Activated naive CD4-positive, alpha-beta T cell treated with anti-CD3 and anti-CD28 coated beads for 36 hours (primary cell): ENCODE measurements at regions of chr2 and their contacts with region 1.

Region 1: GRCh38 chr2:94956797-94957391 is 68.6 kb upstream of the MAL start:
- DNase-seq: peak; percentile 63
- H3K4me3 Mint-ChIP-seq: no peak overlapping the region
- H3K27ac Mint-ChIP-seq: no peak overlapping the region
- H3K4me1 Mint-ChIP-seq: no peaks in the 10 kb centered on the region
- H3K27me3 Mint-ChIP-seq: peaks cover 38% of the 10 kb centered on the region

Region 2: DNA sequence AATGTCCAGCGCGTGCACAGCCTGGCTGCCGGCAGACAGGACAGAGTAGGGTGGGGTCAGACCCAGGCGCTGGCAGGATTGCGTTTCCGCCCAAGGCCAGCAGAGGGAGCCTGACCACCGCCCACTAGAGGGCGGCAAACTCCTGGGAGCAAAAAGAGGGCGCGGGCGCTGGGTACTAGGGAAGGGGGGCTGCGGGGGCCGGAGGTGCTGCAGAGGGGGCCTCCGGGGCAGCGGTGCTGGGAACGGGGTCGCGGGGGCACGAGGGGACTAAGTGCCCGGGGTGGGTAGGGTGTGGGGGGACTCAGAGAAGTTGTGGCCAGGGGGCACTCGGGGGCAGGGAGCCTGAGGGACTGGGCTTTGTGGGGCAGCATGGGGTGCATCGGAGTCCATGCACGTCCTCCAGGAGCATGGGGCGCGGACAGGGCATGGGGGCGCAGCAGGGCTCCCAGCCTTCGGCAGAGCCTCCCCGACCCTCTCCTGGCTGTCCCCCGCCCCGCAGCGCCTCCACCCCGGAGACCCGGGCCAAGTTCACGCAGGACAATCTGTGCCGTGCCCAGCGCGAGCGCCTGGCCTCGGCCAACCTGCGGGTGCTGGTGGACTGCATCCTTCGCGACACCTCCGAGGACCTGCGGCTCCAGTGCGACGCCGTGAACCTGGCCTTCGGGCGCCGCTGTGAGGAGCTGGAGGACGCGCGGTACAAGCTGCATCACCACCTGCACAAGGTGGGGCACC is 82.5 kb before region 1 on chr2:
- CTCF ChIA-PET with region 1: interaction called, 20 read pairs
- intact Hi-C with region 1: loop called (anchors 1 kb)
- DNase-seq: peak; percentile 75
- H3K4me3 Mint-ChIP-seq: no peak overlapping the region
- H3K27ac Mint-ChIP-seq: no peak overlapping the region
- H3K4me1 Mint-ChIP-seq: no peaks in the 10 kb centered on the region
- H3K27me3 Mint-ChIP-seq: peaks cover 15% of the 10 kb centered on the region

Region 3: DNA sequence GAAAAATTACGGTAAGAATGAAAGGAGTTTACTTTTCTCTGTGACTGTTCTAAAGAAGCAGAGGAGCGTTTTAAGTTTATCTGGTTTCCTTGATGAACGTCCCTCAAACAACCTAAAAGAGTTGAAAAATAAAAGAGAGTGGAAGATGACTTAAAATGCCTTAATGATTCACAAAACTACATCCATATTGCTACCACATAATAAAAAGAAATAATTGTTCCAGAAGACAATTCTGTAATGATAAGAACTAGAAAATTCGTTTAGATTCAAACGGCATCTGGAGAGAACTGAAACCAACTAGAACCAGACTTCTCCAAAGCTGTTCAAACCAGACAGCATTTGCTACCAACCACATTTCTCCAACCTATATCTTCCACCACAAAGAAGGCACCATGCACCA is 17.5 kb before region 1 on chr2:
- CTCF ChIA-PET with region 1: interaction called, 11 read pairs
- intact Hi-C with region 1: no loop called
- DNase-seq: no peak
- H3K4me3 Mint-ChIP-seq: no peak overlapping the region
- H3K27ac Mint-ChIP-seq: no peak overlapping the region
- H3K4me1 Mint-ChIP-seq: no peaks in the 10 kb centered on the region
- H3K27me3 Mint-ChIP-seq: peaks cover 27% of the 10 kb centered on the region

Region 4: DNA sequence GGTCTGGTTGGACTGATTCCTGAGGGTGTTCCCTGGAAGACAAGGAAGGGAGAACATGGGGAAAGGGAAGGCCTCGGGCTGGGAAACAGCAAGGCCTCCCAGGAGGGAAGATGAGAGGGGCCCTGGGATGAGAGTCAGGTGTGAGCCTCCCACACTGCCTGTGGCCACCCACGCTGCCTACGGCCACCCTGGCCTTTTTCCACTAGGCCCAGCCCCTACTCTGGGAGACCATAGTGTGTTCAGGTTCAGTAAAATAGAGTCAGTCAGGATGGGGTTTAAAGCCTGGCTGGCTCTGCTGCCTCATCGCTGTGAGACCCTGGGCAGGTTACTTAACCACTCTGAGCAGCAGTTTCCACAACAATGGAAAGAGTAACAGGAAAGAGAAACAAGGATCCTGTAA is 20.9 kb after region 1 on chr2:
- CTCF ChIA-PET with region 1: interaction called, 11 read pairs
- intact Hi-C with region 1: no loop called
- DNase-seq: no peak
- H3K4me3 Mint-ChIP-seq: no peak overlapping the region
- H3K27ac Mint-ChIP-seq: no peak overlapping the region
- H3K4me1 Mint-ChIP-seq: no peaks in the 10 kb centered on the region
- H3K27me3 Mint-ChIP-seq: peaks cover 11% of the 10 kb centered on the region